ENCODE measurements at regions of chr19 and their contacts with region 1.

Region 1: GRCh38 chr19:12294249-12295158 is at the start of gene ZNF44:
- DNase-seq: peak; percentile 88 to 99 (median 94)
- ATAC-seq: peak; percentile 95
- H3K4me3 ChIP-seq: peak within 1 kb of the TSS; percentile 96
- H3K4me3 Mint-ChIP-seq: peak within 1 kb of the TSS; percentile 98
- H3K27ac ChIP-seq: peak within 1 kb of the TSS; percentile 78 to 92
- H3K27ac Mint-ChIP-seq: peak within 1 kb of the TSS; percentile 99
- H3K4me1 ChIP-seq: peaks cover 46% of the 10 kb centered on the region
- H3K4me1 Mint-ChIP-seq: peaks cover 41% of the 10 kb centered on the region
- H3K27me3 ChIP-seq: no peaks in the 10 kb centered on the region
- H3K27me3 Mint-ChIP-seq: no peaks in the 10 kb centered on the region
- CTCF ChIP-seq: no peak
- total RNA-seq, gene ZNF44: 30.4 to 31.4 TPM

Region 2: GRCh38 chr19:12162882-12163806 is 131.4 kb before region 1 on chr19 and contains the start of gene ZNF136:
- CTCF ChIA-PET with region 1: no interaction called
- POLR2A ChIA-PET with region 1: interaction called, 12 read pairs
- intact Hi-C with region 1: loop called (anchors 1 to 5 kb)
- DNase-seq: peak; percentile 84 to 97 (median 90)
- ATAC-seq: peak; percentile 99
- H3K4me3 ChIP-seq: peak within 1 kb of the TSS; percentile 89
- H3K4me3 Mint-ChIP-seq: peak within 1 kb of the TSS; percentile 97
- H3K27ac ChIP-seq: peak within 1 kb of the TSS; percentile 88 to 96
- H3K27ac Mint-ChIP-seq: peak within 1 kb of the TSS; percentile 89
- H3K4me1 ChIP-seq: peaks cover 42% of the 10 kb centered on the region
- H3K4me1 Mint-ChIP-seq: peaks cover 50% of the 10 kb centered on the region
- H3K27me3 ChIP-seq: no peaks in the 10 kb centered on the region
- H3K27me3 Mint-ChIP-seq: no peaks in the 10 kb centered on the region
- CTCF ChIP-seq: no peak
- total RNA-seq, gene ZNF136: 40.5 to 45.6 TPM

Region 3: GRCh38 chr19:12278713-12279112 is 15.8 kb before region 1 on chr19:
- CTCF ChIA-PET with region 1: interaction called, 4 read pairs
- POLR2A ChIA-PET with region 1: interaction called, 27 read pairs
- intact Hi-C with region 1: no loop called
- DNase-seq: no peak
- ATAC-seq: no peak
- H3K4me3 ChIP-seq: no peak overlapping the region
- H3K4me3 Mint-ChIP-seq: peak overlapping the region; percentile 50
- H3K27ac ChIP-seq: no peak overlapping the region
- H3K27ac Mint-ChIP-seq: peak overlapping the region; percentile 86
- H3K4me1 ChIP-seq: peaks cover 13% of the 10 kb centered on the region
- H3K4me1 Mint-ChIP-seq: peaks cover 63% of the 10 kb centered on the region
- H3K27me3 ChIP-seq: no peaks in the 10 kb centered on the region
- H3K27me3 Mint-ChIP-seq: no peaks in the 10 kb centered on the region
- CTCF ChIP-seq: no peak

Measured in CD4-positive, alpha-beta T cell (primary cell).